ENCODE measurements at regions of chr1 and their contacts with region 1.

Region 1: DNA sequence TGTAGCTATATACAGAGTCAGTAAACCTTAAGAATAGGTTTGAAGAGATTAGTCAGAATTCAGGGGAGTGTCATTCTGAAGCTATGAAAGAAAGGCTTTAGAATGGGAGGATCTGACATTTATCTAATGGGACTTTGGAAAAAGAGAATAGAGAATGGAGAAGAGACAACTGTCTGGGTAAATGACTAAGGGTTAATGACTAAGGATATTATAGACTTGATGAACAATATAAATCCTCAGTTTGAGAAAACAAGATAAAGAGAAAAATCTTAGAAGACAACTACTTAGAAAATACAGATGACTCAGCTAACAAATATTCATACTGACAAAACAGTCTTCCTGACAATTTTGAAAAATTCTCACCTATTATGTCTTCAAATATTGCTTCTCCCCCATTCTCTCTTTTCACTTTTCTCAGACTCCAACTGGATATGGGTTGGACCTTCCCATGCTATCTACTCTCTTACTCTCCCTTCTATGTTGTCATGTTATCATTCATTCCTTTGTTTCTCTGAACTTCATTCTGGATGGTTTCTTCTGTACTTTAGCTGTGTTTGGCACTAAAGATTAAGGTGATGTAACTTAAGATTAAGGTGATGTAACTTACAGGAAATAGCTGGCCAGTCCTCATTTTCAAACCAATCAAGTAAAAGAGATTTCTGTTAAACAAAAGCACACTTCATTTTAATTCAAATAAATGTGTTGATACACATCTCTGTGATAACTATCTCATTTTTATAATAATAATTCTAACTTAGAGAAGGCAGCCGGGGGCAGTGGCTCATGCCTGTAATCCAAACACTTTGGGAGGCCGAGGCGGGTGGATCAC is 20.3 kb downstream of the SLC16A1 start:
- DNase-seq: peak; percentile 57
- H3K4me3 ChIP-seq: no peak overlapping the region
- H3K27ac ChIP-seq: peak overlapping the region; percentile 74
- H3K4me1 ChIP-seq: peaks cover 32% of the 10 kb centered on the region
- H3K27me3 ChIP-seq: no peaks in the 10 kb centered on the region
- CTCF ChIP-seq: no peak
- POLR2A ChIP-seq: no peak

Region 2: GRCh38 chr1:112911506-112911905 is 24.2 kb before region 1 on chr1:
- CTCF ChIA-PET with region 1: interaction called, 10 read pairs
- POLR2A ChIA-PET with region 1: interaction called, 3 read pairs
- dilution Hi-C with region 1: no loop called
- intact Hi-C with region 1: no loop called
- DNase-seq: no peak
- H3K4me3 ChIP-seq: no peak overlapping the region
- H3K27ac ChIP-seq: no peak overlapping the region
- H3K4me1 ChIP-seq: peaks cover 14% of the 10 kb centered on the region
- H3K27me3 ChIP-seq: no peaks in the 10 kb centered on the region
- CTCF ChIP-seq: no peak
- POLR2A ChIP-seq: no peak

Region 3: GRCh38 chr1:112946683-112947082 is 11.0 kb after region 1 on chr1:
- CTCF ChIA-PET with region 1: interaction called, 12 read pairs
- POLR2A ChIA-PET with region 1: no interaction called
- dilution Hi-C with region 1: no loop called
- intact Hi-C with region 1: no loop called
- DNase-seq: no peak
- H3K4me3 ChIP-seq: no peak overlapping the region
- H3K27ac ChIP-seq: no peak overlapping the region
- H3K4me1 ChIP-seq: peaks cover 5% of the 10 kb centered on the region
- H3K27me3 ChIP-seq: no peaks in the 10 kb centered on the region
- CTCF ChIP-seq: no peak
- POLR2A ChIP-seq: no peak

Measured in endothelial cell of umbilical vein (primary cell).